Panc1 (cell line): ENCODE measurements at regions of chr17 and their contacts with region 1.

Region 1: DNA sequence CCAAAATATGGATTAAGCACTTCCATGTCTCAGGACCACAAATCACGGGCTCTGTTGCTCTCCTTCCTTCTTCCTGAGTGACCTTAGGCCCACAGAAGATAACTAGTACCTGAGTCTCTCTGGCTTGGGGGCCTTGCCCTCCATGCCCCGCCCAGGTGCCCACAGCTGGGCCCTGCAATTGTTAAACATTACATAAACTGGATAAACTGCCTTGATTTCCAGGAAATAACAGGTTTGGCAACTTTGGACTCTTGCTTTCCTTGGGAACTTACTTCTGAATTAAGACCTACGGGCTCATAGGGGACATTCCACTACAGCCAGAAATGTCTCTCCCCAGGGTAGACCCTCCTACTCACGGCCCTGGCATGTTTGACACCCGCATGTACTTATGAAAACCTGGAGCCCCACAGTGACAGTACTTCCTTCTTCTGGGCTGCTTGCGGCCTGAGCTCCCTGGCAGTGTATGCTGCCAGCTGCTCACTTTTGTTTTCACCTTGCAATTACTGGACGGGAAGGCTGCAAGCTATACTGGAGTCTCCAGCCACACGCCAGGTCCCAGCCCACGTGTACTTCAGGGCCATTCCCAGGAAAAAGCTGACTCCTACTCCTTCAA is 2.3 kb upstream of the UBALD2 start:
- DNase-seq: no peak
- ATAC-seq: no peak
- H3K4me3 ChIP-seq: no peak overlapping the region
- H3K27ac ChIP-seq: peak overlapping the region; percentile 92
- H3K4me1 ChIP-seq: peaks cover 32% of the 10 kb centered on the region
- H3K27me3 ChIP-seq: no peaks in the 10 kb centered on the region
- CTCF ChIP-seq: no peak

Region 2: DNA sequence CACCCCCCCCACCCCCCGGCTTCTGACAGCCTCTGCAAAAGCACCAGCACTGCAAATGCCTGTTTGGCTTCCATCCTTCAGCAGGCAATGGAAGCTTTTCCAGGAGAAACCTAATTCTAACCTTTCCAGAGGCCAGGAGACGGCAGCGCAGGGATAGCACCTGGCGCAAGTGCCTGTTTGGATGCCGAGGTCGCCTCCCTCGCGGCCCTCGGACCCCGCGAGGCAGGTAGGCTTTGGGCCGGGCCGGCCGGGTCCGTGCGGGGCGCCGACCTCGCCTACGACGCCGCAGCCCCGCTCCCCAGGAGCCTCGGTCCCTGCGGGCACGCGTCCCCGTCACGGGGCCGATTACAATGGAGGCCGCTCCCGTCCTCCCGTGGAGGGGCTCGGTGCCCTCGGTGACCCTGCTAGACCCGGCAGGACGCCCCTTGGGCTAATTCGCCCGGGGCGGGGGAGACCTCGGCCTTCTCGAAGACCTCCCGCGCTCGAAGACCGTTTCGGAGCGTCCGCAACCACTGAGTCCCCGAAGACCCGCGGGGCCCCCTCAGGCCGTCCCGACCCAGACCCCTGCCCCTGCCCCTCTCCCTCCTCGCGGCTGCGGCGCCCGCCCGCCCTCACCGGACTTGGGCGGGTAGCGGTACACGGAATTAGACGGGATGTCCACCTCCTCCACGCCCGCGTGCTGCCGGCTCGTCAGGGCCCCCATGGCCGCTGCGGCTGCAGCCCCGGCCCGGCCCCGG is 23.1 kb before region 1 on chr17:
- CTCF ChIA-PET with region 1: no interaction called
- POLR2A ChIA-PET with region 1: interaction called, 10 read pairs
- in situ Hi-C with region 1: no loop called
- intact Hi-C with region 1: no loop called
- DNase-seq: no peak
- ATAC-seq: peak; percentile 42
- H3K4me3 ChIP-seq: peak overlapping the region; percentile 43 to 63
- H3K27ac ChIP-seq: no peak overlapping the region
- H3K4me1 ChIP-seq: peaks cover 4% of the 10 kb centered on the region; the same call in 1 of the 2 replicates
- H3K27me3 ChIP-seq: peaks cover 14% of the 10 kb centered on the region
- CTCF ChIP-seq: no peak